GM12878 (cell line): ENCODE measurements at regions of chr1 and their contacts with region 1.

Region 1: DNA sequence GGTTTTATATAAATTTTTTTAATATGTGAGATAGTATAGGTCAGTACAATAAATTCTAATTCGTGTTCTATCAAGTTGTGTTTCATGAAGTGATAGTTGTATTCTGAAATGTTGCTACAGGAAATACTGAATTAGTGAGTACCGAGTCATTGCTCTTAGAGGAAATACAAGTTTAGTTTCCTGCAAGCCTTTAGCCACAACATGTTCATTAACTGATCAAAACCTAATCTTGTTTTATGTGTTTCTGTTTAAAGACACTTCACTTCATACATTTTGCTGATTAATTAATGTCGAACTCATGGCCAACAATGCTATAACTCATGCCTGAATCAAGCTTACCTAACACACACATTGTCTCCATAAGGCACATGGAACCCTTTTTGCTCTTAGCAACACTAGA is 43.6 kb downstream of the LRRC7 start:
- DNase-seq: no peak
- ATAC-seq: no peak
- H3K4me3 ChIP-seq: no peak overlapping the region
- H3K27ac ChIP-seq: no peak overlapping the region
- H3K4me1 ChIP-seq: no peaks in the 10 kb centered on the region
- H3K27me3 ChIP-seq: no peaks in the 10 kb centered on the region
- CTCF ChIP-seq: no peak
- EP300 ChIP-seq: no peak
- POLR2A ChIP-seq: no peak
- RAD21 ChIP-seq: no peak

Region 2: GRCh38 chr1:69551476-69552324 is 59.6 kb before region 1 on chr1:
- CTCF ChIA-PET with region 1: no interaction called
- POLR2A ChIA-PET with region 1: no interaction called
- RAD21 ChIA-PET with region 1: no interaction called
- SMC1A ChIA-PET with region 1: no interaction called
- in situ Hi-C with region 1: no loop called
- intact Hi-C with region 1: loop called (anchors 10 kb)
- DNase-seq: no peak
- ATAC-seq: no peak
- H3K4me3 ChIP-seq: no peak overlapping the region
- H3K27ac ChIP-seq: no peak overlapping the region
- H3K4me1 ChIP-seq: no peaks in the 10 kb centered on the region
- H3K27me3 ChIP-seq: no peaks in the 10 kb centered on the region
- CTCF ChIP-seq: no peak
- EP300 ChIP-seq: no peak
- POLR2A ChIP-seq: no peak
- RAD21 ChIP-seq: no peak